ENCODE measurements at regions of chr11 and their contacts with region 1.

Region 1: DNA sequence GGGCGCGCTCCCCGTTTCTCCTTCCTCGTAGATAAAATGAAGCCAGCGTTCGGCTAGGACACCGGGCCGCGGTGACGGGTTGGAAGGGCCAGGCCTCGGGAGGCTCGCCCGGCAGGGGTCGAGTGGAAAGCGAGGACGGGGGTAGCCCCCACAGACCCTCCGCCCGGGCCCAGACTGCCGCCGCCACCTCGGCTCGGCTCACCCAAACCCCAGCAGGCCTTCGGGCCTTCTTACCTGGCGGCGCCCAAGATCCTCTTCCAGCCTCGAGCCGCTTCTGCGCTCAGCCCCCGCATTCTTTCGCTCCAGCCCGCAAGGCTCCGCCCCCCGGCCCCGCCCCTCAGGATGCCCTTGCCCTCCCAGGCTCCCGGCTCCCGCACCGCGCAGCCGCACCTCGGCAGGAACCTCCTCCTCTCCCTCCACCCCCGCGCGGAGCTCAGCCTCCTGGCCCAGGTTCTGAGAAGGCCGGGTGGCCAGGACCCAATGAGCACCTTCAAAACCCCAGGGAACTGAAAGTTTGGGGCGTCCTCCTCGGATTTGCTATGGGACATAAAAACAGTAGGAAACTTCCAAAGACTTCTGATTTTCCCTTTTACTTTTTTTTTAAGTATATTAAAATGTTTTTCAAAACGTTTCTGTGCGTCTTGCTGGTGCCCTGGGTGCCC is at the start of gene CD59:
- DNase-seq: peak; percentile 94
- H3K4me3 Mint-ChIP-seq: peak within 1 kb of the TSS; percentile 82
- H3K27ac Mint-ChIP-seq: peak within 1 kb of the TSS; percentile 70
- H3K4me1 Mint-ChIP-seq: peaks cover 48% of the 10 kb centered on the region
- H3K27me3 Mint-ChIP-seq: no peaks in the 10 kb centered on the region
- total RNA-seq, gene CD59: 79.4 TPM

Region 2: DNA sequence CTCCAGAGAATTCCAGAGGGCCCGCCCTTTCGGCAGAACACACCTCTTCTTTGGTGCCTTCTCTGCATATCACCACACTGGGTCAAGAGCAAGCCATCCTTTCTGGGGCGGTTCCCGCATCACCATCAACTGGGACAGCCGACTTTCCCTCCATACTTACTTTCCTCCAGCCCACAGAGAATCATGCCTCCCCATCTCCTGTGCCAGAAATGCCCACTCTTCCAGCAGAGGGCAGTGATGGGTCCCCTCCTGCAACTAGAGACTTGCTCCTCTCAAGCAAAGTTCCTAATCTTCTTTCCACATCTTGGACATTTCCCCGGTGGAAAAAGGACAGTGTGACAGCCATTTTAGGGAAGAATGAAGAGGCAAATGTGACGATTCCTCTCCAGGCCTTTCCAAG is 193.4 kb before region 1 on chr11:
- CTCF ChIA-PET with region 1: no interaction called
- POLR2A ChIA-PET with region 1: no interaction called
- intact Hi-C with region 1: loop called (anchors 5 kb)
- DNase-seq: peak; percentile 52
- H3K4me3 Mint-ChIP-seq: no peak overlapping the region
- H3K27ac Mint-ChIP-seq: no peak overlapping the region
- H3K4me1 Mint-ChIP-seq: no peaks in the 10 kb centered on the region
- H3K27me3 Mint-ChIP-seq: peaks cover 29% of the 10 kb centered on the region

Region 3: DNA sequence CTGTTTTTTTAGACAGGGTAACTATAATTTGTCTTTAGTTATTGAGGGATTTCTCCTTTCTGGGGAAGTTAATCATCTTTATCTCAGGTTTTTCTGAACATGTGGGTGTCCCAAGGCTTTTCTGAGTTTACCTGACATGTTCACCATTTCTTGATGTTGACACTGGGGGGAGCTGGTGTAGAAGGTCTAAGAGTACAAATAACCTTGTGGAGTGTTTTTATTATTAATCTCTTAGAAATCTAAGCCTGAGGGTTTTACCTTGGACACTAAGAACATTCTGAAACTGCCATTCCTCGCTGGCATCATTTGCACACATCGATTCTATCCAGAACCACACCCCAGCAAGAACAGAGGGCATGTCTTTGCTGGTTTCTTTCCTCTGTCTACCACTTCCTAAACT is 20.0 kb before region 1 on chr11:
- CTCF ChIA-PET with region 1: interaction called, 13 read pairs
- POLR2A ChIA-PET with region 1: interaction called, 3 read pairs
- intact Hi-C with region 1: no loop called
- DNase-seq: no peak
- H3K4me3 Mint-ChIP-seq: no peak overlapping the region
- H3K27ac Mint-ChIP-seq: no peak overlapping the region
- H3K4me1 Mint-ChIP-seq: peaks cover 2% of the 10 kb centered on the region
- H3K27me3 Mint-ChIP-seq: no peaks in the 10 kb centered on the region

Region 4: DNA sequence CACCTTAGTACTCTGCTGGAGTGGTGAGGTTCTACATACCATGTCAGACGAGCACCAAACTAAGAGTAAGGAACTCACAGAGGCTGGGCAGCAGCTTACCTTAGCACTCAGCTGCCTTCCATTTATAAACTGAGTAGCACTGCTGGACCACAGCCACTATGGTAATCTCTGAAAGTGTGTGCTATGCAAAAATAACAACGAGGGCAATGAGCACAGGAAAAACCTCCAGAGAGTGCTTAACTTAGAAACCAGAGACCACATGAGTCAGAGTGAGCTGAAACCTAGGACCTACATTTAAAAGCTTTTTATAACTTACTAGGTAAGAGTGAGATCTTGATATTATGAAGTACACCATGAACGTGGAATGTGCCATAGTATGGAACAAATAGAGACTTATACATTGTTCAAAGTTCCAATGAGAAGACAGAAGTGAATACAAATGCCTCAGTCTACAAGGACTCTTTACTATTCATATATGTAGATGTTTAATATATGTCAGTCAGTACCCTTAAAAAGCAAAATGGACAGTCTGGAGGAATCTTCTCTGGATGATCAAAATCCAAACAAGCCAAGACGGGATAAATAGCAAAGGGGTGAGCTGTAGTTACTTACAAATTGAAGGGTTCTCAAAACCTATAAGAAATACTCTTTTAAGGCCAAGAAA is 17.2 kb after region 1 on chr11:
- CTCF ChIA-PET with region 1: interaction called, 7 read pairs
- POLR2A ChIA-PET with region 1: interaction called, 5 read pairs
- intact Hi-C with region 1: loop called (anchors 1 kb)
- DNase-seq: peak; percentile 27
- H3K4me3 Mint-ChIP-seq: no peak overlapping the region
- H3K27ac Mint-ChIP-seq: peak overlapping the region; percentile 11
- H3K4me1 Mint-ChIP-seq: peaks cover 11% of the 10 kb centered on the region
- H3K27me3 Mint-ChIP-seq: no peaks in the 10 kb centered on the region

Region 5: DNA sequence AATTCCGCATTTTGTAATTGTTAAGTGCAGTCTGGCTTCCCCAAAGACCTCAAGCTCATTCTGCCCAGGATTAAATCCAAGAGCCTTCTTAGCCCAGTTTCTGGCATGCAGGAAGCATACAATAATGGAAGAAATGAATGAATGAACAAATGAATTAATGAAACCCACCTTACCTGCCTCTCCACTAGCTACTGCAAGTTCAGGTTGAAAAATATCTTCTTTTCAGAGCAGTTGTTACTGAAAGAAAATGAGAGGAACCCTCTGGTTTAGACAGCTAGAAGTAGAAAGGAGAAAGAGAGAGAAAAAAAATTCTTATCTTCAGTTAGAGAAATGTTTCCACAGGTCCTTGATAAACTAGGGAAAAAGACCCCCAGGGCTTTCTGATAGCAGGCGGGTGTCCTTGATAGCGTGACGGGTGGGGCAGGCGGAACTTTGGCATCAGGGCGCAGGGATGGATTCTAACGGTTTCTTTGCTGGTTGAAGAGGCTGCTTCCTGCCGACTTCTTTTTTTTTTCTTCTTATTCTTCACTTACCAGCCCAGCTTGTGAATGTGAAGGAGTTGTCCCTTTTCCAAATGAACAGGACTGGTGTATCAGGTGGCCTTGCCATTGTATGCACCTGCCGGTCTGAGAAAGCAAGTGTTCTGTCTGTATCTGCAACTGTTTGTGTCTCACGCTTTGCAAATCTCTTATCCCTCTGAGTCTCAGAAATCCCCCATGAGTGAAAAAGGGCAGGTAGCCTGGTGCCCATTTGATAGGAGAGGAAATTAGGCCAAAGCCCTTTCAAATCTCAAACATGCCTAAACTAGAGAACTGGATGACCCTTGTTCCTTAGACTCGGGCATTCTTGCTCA is 145.6 kb after region 1 on chr11:
- CTCF ChIA-PET with region 1: no interaction called
- POLR2A ChIA-PET with region 1: no interaction called
- intact Hi-C with region 1: no loop called
- DNase-seq: no peak
- H3K4me3 Mint-ChIP-seq: no peak overlapping the region
- H3K27ac Mint-ChIP-seq: no peak overlapping the region
- H3K4me1 Mint-ChIP-seq: no peaks in the 10 kb centered on the region
- H3K27me3 Mint-ChIP-seq: peaks cover 76% of the 10 kb centered on the region

Region 6: DNA sequence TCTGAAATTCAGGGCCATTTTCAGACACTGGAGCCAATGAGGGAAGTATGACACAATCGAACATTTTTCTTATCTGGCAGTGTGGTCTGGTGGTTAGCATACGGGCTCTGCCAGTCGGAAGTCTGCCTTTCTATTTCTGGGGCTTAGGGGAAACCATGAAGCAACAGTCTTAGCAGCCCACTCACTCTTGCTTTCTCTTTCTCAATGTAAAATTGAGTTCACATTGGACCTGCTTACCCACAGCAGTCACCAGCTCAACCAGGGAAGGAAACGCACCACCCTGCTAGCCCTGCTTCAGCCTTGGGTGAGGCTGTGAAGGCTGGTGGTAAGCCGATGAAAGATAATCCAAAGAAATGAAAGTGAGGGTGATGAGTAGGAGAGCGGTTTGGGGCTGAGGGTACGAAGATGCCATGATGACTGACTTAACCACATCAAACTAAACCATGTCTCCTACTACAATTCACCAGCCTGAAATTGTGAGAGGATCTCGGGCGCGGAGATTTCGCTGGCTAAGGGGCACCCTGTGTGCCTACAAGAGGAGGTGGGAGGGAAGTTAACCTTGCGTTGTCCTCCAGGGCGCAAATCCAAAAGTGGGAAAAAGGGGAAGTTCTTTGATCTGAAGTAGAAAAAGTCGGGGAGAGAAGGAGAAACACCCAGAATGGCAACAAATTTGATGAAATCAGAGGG is 157.6 kb after region 1 on chr11:
- CTCF ChIA-PET with region 1: no interaction called
- POLR2A ChIA-PET with region 1: no interaction called
- intact Hi-C with region 1: loop called (anchors 5 kb)
- DNase-seq: peak; percentile 88
- H3K4me3 Mint-ChIP-seq: peak overlapping the region; percentile 25
- H3K27ac Mint-ChIP-seq: no peak overlapping the region
- H3K4me1 Mint-ChIP-seq: peaks cover 31% of the 10 kb centered on the region
- H3K27me3 Mint-ChIP-seq: peaks cover 73% of the 10 kb centered on the region